MCF 10A (cell line): ENCODE measurements at regions of chr4 and their contacts with region 1.

Region 1: GRCh38 chr4:86011117-86011516 is 348.7 kb downstream of the MAPK10 start:
- DNase-seq: peak; percentile 98
- H3K4me3 Mint-ChIP-seq: no peak overlapping the region
- H3K27ac Mint-ChIP-seq: peak overlapping the region; percentile 33
- H3K4me1 Mint-ChIP-seq: peaks cover 6% of the 10 kb centered on the region
- H3K27me3 Mint-ChIP-seq: no peaks in the 10 kb centered on the region
- CTCF ChIP-seq: no peak

Region 2: GRCh38 chr4:85769009-85769408 is 242.1 kb before region 1 on chr4:
- CTCF ChIA-PET with region 1: no interaction called
- POLR2A ChIA-PET with region 1: no interaction called
- intact Hi-C with region 1: no loop called
- DNase-seq: no peak
- H3K4me3 Mint-ChIP-seq: no peak overlapping the region
- H3K27ac Mint-ChIP-seq: no peak overlapping the region
- H3K4me1 Mint-ChIP-seq: no peaks in the 10 kb centered on the region
- H3K27me3 Mint-ChIP-seq: no peaks in the 10 kb centered on the region
- CTCF ChIP-seq: no peak

Region 3: DNA sequence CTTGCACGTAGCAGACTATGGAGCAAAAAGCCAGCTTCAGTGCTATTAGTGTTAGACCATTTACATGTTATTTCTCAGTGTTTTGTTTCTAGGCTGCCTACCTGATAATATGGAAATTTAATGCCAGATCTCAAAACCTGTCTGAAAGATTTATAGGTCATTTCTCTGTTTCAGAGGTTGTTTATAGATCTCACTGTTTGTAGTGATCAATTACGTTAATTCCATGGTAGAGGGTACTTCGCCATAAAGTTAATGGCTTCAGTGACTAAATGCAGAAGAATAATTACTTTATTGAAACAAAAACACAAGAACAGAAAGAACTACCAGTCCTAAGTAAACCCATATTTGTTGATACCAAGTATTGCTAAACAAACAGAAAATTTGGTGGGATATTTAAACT is 115.4 kb before region 1 on chr4:
- CTCF ChIA-PET with region 1: no interaction called
- POLR2A ChIA-PET with region 1: no interaction called
- intact Hi-C with region 1: no loop called
- DNase-seq: no peak
- H3K4me3 Mint-ChIP-seq: no peak overlapping the region
- H3K27ac Mint-ChIP-seq: no peak overlapping the region
- H3K4me1 Mint-ChIP-seq: no peaks in the 10 kb centered on the region
- H3K27me3 Mint-ChIP-seq: no peaks in the 10 kb centered on the region
- CTCF ChIP-seq: no peak

Region 4: GRCh38 chr4:85953651-85954018 is 57.5 kb before region 1 on chr4:
- CTCF ChIA-PET with region 1: no interaction called
- POLR2A ChIA-PET with region 1: no interaction called
- intact Hi-C with region 1: loop called (anchors 2 kb)
- DNase-seq: peak; percentile 95
- H3K4me3 Mint-ChIP-seq: peak overlapping the region; percentile 2
- H3K27ac Mint-ChIP-seq: peak overlapping the region; percentile 77
- H3K4me1 Mint-ChIP-seq: peaks cover 28% of the 10 kb centered on the region
- H3K27me3 Mint-ChIP-seq: no peaks in the 10 kb centered on the region
- CTCF ChIP-seq: no peak

Region 5: DNA sequence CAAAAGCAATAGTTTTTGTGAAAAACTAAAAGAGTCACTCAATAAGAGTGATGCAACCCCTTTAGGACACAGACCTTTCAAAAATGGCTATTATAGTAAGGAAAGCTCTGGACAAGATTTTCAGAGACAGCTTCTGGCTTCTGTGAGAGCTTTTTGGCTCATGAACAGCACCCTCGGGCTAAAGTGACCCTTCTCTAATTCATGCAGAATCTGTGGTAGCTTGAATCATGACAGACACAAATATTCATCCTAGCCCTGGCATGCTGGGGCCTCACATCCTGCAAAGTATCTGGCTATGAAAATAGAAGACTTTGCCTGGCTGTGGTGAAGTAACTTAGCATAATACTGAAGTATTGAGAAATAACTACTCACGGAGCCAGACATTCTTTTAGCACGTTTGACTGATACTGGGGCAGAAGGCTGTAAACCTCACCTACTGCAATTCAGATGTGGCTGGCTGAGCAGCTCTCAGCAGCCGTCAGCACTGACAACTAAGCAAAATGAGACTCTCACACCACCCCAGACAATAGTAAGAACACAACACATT is 21.4 kb after region 1 on chr4:
- CTCF ChIA-PET with region 1: interaction called, 5 read pairs
- POLR2A ChIA-PET with region 1: interaction called, 10 read pairs
- intact Hi-C with region 1: loop called (anchors 2 kb)
- DNase-seq: peak; percentile 96
- H3K4me3 Mint-ChIP-seq: peak overlapping the region; percentile 49
- H3K27ac Mint-ChIP-seq: peak overlapping the region; percentile 81
- H3K4me1 Mint-ChIP-seq: peaks cover 43% of the 10 kb centered on the region
- H3K27me3 Mint-ChIP-seq: no peaks in the 10 kb centered on the region
- CTCF ChIP-seq: no peak